B cell (primary cell): ENCODE measurements at regions of chr11 and their contacts with region 1.

Region 1: GRCh38 chr11:47407746-47408590 is at the start of gene SLC39A13:
- DNase-seq: peak; percentile 98
- ATAC-seq: peak; percentile 81
- H3K4me3 ChIP-seq: peak within 1 kb of the TSS; percentile 60 to 94 (median 66)
- H3K4me3 Mint-ChIP-seq: peak within 1 kb of the TSS; percentile 92
- H3K27ac ChIP-seq: peak within 1 kb of the TSS; percentile 85 to 91
- H3K27ac Mint-ChIP-seq: peak within 1 kb of the TSS; percentile 95
- H3K4me1 ChIP-seq: peaks cover 16 to 25% of the 10 kb centered on the region in 2 donors
- H3K4me1 Mint-ChIP-seq: peaks cover 27% of the 10 kb centered on the region
- H3K27me3 ChIP-seq: no peaks in the 10 kb centered on the region
- H3K27me3 Mint-ChIP-seq: no peaks in the 10 kb centered on the region
- CTCF ChIP-seq: peak; percentile 92
- total RNA-seq, gene SLC39A13: 33.0 and 39.4 TPM in 2 replicates

Region 2: DNA sequence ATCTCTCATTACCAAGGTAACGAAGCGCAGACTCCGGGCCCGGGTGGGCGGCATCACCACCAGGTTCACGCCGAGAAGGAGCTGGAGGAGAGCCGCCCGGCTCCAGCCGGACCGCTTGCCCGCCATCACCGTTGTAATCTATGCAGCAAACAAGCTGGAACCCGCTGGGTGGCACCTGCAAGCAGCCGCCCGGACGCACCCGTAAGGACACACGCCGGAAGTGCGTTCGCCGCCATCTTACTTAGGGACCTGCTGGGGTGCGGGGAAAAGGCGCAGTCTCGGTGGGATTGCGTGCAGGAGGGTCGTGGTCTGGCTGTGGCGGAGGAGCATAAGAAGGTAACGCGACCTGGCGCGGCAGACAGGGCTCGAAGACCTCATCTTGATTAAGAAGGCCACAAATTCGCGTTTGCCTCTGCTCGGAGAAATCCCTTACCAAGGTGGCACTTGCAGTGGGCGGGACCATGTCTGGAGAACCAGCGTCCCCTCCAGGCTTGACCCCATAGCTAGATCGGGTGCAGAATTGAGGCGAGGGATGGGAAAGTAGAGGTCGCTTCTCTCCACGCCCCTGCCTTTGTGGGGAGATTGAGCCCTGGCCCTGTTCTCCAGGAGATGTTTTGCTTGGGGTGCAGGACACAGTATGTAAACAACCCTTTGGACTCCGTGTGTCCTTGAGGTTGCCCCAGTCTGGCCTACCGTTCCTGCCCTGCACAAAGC is 159.1 kb before region 1 on chr11 and contains the start of gene ACP2:
- CTCF ChIA-PET with region 1: interaction called, 13 read pairs
- POLR2A ChIA-PET with region 1: interaction called, 5 read pairs
- intact Hi-C with region 1: loop called (anchors 1 kb)
- DNase-seq: peak; percentile 94
- ATAC-seq: peak; percentile 94
- H3K4me3 ChIP-seq: peak within 1 kb of the TSS; percentile 65 to 99 (median 90)
- H3K4me3 Mint-ChIP-seq: peak within 1 kb of the TSS; percentile 99
- H3K27ac ChIP-seq: peak within 1 kb of the TSS; percentile 56 to 79
- H3K27ac Mint-ChIP-seq: peak within 1 kb of the TSS; percentile 99
- H3K4me1 ChIP-seq: peaks cover 13 to 22% of the 10 kb centered on the region in 2 donors
- H3K4me1 Mint-ChIP-seq: peaks cover 24% of the 10 kb centered on the region
- H3K27me3 ChIP-seq: no peaks in the 10 kb centered on the region
- H3K27me3 Mint-ChIP-seq: no peaks in the 10 kb centered on the region
- CTCF ChIP-seq: no peak
- total RNA-seq, gene ACP2: 23.5 and 29.5 TPM in 2 replicates

Region 3: GRCh38 chr11:47329987-47330931 is 77.7 kb before region 1 on chr11:
- CTCF ChIA-PET with region 1: interaction called, 25 read pairs
- POLR2A ChIA-PET with region 1: no interaction called
- intact Hi-C with region 1: loop called (anchors 1 kb)
- DNase-seq: no peak
- ATAC-seq: no peak
- H3K4me3 ChIP-seq: no peak overlapping the region
- H3K4me3 Mint-ChIP-seq: no peak overlapping the region
- H3K27ac ChIP-seq: no peak overlapping the region
- H3K27ac Mint-ChIP-seq: peak overlapping the region; percentile 20
- H3K4me1 ChIP-seq: peaks cover 0 to 16% of the 10 kb centered on the region in 2 donors
- H3K4me1 Mint-ChIP-seq: peaks cover 14% of the 10 kb centered on the region
- H3K27me3 ChIP-seq: no peaks in the 10 kb centered on the region
- H3K27me3 Mint-ChIP-seq: no peaks in the 10 kb centered on the region
- CTCF ChIP-seq: no peak

Region 4: DNA sequence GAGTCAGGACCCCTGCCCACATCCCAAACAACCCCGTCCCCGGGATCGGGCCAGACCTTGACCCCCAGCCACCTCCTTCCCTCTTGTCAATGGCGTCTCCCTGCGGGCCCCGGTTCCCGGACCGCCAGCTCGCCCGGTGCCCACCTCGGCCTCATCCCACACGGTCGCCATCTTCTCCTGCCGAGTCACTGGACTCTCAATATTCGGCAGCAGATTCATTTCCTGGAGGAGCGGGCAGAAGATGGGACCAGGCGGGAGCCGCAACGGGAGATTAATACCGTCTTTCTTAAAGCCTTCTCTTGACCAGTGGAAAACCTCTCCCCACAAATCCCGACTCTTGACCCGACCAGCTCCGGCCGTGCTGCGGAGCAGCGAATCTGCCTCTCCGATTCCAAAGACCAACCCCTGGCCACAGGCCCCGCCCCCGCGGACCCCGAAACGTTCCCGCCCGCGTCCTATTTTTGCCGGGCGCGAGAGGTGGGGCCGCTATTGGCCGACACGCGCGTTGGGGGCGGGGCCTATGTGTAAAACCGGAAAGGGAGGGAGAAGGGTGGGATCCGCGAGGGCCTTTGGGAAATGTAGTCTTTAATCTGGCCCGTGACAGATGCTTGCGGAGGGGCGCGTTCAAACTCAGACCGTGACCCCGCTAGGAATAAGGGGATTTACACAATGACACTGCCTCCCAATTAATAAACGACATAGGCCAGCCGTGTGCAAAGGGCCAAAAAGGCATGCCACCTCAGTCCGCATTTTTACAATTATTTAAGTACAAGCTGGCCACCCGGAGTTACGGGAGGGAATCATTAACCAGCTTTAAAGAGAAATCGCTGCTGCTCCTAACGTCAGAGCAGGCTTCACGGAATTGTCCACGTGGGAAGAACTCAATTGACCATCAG is 18.3 kb after region 1 on chr11 and contains the start of gene PSMC3:
- CTCF ChIA-PET with region 1: interaction called, 35 read pairs
- POLR2A ChIA-PET with region 1: interaction called, 4 read pairs
- intact Hi-C with region 1: loop called (anchors 1 kb)
- DNase-seq: peak; percentile 97
- ATAC-seq: peak; percentile 98
- H3K4me3 ChIP-seq: peak within 1 kb of the TSS; percentile 88 to 99 (median 93)
- H3K4me3 Mint-ChIP-seq: peak within 1 kb of the TSS; percentile 100
- H3K27ac ChIP-seq: peak within 1 kb of the TSS; percentile 78 to 94
- H3K27ac Mint-ChIP-seq: peak within 1 kb of the TSS; percentile 98
- H3K4me1 ChIP-seq: peaks cover 9 to 22% of the 10 kb centered on the region in 2 donors
- H3K4me1 Mint-ChIP-seq: peaks cover 25% of the 10 kb centered on the region
- H3K27me3 ChIP-seq: no peaks in the 10 kb centered on the region
- H3K27me3 Mint-ChIP-seq: no peaks in the 10 kb centered on the region
- CTCF ChIP-seq: no peak
- total RNA-seq, gene PSMC3: 59.9 and 62.7 TPM in 2 replicates

Region 5: GRCh38 chr11:47460571-47461235 is 52.7 kb after region 1 on chr11:
- CTCF ChIA-PET with region 1: no interaction called
- POLR2A ChIA-PET with region 1: no interaction called
- intact Hi-C with region 1: no loop called
- DNase-seq: no peak
- ATAC-seq: no peak
- H3K4me3 ChIP-seq: no peak overlapping the region
- H3K4me3 Mint-ChIP-seq: no peak overlapping the region
- H3K27ac ChIP-seq: no peak overlapping the region
- H3K27ac Mint-ChIP-seq: no peak overlapping the region
- H3K4me1 ChIP-seq: no peaks in the 10 kb centered on the region
- H3K4me1 Mint-ChIP-seq: no peaks in the 10 kb centered on the region
- H3K27me3 ChIP-seq: no peaks in the 10 kb centered on the region
- H3K27me3 Mint-ChIP-seq: no peaks in the 10 kb centered on the region
- CTCF ChIP-seq: no peak

Region 6: DNA sequence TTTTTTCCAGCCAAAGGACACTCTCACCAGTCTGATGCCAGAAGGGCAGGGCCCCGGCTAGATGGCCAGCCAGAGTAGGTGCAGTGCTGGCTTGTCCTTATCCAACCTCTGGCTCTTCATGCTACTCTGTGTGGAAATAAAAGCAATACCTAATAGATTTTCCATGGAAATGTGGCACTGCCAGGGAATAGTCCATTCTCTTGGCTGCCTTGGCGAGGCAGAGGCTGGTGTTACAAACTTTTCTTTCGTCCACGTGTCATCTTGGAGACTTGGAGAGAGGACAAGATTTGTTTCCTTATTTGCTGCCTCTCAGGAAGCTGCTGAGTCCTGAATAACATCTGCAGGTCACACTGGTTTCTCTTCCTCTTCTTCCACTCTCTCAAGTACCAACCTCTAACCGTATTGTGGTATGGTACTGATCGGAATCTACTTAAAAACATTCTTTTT is 203.4 kb after region 1 on chr11:
- CTCF ChIA-PET with region 1: no interaction called
- POLR2A ChIA-PET with region 1: no interaction called
- intact Hi-C with region 1: no loop called
- DNase-seq: peak; percentile 65
- ATAC-seq: peak; percentile 88
- H3K4me3 ChIP-seq: peak overlapping the region in 1 of 5 experiments; percentile 22
- H3K4me3 Mint-ChIP-seq: peak overlapping the region; percentile 65
- H3K27ac ChIP-seq: peak overlapping the region in 1 of 2 donors; percentile 50
- H3K27ac Mint-ChIP-seq: peak overlapping the region; percentile 33
- H3K4me1 ChIP-seq: peaks cover 12 to 16% of the 10 kb centered on the region in 2 donors
- H3K4me1 Mint-ChIP-seq: peaks cover 15% of the 10 kb centered on the region
- H3K27me3 ChIP-seq: no peaks in the 10 kb centered on the region
- H3K27me3 Mint-ChIP-seq: no peaks in the 10 kb centered on the region
- CTCF ChIP-seq: no peak

Region 7: DNA sequence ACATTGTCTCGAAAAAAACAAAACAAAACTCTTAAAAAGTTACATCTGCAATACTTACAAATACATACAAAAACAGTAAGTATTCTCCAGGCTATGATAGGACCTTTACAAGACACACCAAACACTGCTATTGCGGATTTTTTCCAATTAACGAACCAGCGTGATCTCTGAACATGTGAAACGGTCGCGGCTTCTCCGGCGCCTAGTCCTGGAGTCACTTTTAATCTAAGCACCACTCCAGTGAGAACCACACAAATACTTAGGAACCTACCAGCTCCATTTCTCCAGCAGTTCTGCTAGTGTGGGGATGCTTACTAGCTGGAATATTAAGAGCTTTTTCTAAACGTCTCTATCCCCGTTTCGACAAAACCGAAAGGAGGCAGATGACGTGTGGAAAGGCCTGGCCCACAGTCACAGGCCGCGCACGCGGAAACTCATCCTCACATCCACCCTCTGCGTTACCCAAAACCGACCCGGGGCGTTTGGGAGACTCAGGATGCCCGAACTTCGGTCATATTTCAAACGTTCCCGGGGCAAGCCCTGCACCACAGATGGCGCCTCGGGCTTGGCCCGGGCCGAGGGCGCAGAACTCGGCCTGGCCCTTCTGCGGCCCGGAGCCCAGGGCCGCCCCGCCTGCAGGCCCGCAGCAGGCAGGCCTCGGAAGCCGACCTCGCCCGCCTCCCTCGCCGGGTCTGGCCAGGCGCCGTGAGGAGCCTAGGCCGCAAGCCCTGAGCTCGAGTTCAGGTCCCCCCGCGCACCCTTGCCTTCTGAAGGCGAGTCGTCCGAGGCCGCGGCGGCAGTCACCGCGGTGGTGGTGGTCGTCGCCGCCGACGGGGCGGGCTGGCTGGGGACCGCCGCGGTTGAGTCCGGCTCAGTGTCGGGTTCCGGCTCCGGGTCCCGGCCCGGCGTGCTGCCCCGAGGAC is 358.6 kb after region 1 on chr11:
- CTCF ChIA-PET with region 1: no interaction called
- POLR2A ChIA-PET with region 1: no interaction called
- intact Hi-C with region 1: loop called (anchors 5 kb)
- DNase-seq: peak; percentile 88
- ATAC-seq: peak; percentile 15
- H3K4me3 ChIP-seq: peak overlapping the region; percentile 49 to 88 (median 78)
- H3K4me3 Mint-ChIP-seq: peak overlapping the region; percentile 97
- H3K27ac ChIP-seq: peak overlapping the region; percentile 91 to 97
- H3K27ac Mint-ChIP-seq: peak overlapping the region; percentile 100
- H3K4me1 ChIP-seq: peaks cover 19 to 24% of the 10 kb centered on the region in 2 donors
- H3K4me1 Mint-ChIP-seq: peaks cover 26% of the 10 kb centered on the region
- H3K27me3 ChIP-seq: no peaks in the 10 kb centered on the region
- H3K27me3 Mint-ChIP-seq: no peaks in the 10 kb centered on the region
- CTCF ChIP-seq: no peak

Region 8: DNA sequence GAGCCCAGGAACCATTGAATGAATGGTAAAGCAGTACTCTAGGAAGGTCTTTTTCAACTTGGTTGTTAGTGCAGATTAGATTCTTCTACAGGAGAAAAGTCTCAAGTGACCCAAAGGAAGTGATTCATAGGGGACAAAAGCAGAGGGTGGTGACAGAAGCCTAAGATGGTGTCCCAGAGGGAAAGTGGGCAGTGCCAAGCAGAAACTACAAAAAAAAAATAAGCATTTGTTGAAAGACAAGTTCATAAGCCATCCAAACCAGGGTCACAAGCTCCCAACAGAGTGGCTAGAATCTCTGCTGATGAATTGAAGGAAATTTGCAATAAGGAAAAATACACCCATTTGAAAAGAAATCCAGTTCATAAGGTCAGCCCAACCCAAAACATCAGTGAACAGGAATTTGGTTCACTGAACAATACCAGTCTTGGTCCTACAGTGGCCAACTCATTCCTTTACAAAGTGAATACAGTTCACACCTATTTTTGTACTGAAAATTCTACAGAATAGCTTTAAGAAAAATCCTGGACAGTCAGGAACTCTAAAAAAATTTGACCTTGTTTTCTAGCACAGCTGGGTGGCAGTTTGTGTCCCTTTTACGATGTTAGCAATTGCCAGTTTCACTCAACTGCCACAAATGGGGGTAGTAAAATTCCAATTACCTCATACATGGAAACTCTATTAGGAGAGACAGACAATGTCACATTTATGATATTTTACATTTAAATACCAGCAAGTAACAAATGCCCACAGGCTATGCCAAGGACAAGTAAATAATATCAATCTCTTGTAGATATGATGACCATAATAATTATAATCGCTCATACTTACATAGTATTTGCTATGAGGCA is 461.8 kb after region 1 on chr11:
- CTCF ChIA-PET with region 1: no interaction called
- POLR2A ChIA-PET with region 1: no interaction called
- intact Hi-C with region 1: no loop called
- DNase-seq: no peak
- ATAC-seq: no peak
- H3K4me3 ChIP-seq: no peak overlapping the region
- H3K4me3 Mint-ChIP-seq: no peak overlapping the region
- H3K27ac ChIP-seq: no peak overlapping the region
- H3K27ac Mint-ChIP-seq: peak overlapping the region; percentile 17
- H3K4me1 ChIP-seq: peaks cover 10 to 27% of the 10 kb centered on the region in 2 donors
- H3K4me1 Mint-ChIP-seq: peaks cover 40% of the 10 kb centered on the region
- H3K27me3 ChIP-seq: no peaks in the 10 kb centered on the region
- H3K27me3 Mint-ChIP-seq: no peaks in the 10 kb centered on the region
- CTCF ChIP-seq: no peak